ENCODE measurements at regions of chr10 and their contacts with region 1.

Region 1: GRCh38 chr10:124916585-124917427 is 25.1 kb upstream of the ZRANB1 start:
- DNase-seq: peak; percentile 95 to 98 (median 96)
- ATAC-seq: peak; percentile 92
- H3K4me3 ChIP-seq: peak overlapping the region; percentile 53
- H3K27ac ChIP-seq: peak overlapping the region; percentile 84
- H3K4me1 ChIP-seq: peaks cover 14 to 31% of the 10 kb centered on the region in 2 experiments
- H3K27me3 ChIP-seq: no peaks in the 10 kb centered on the region
- CTCF ChIP-seq: no peak; a peak in 1 of 6 replicates
- EP300 ChIP-seq: no peak
- POLR2A ChIP-seq: peak; percentile 88
- RAD21 ChIP-seq: no peak

Region 2: GRCh38 chr10:124763267-124763666 is 153.5 kb before region 1 on chr10:
- CTCF ChIA-PET with region 1: no interaction called
- POLR2A ChIA-PET with region 1: no interaction called
- in situ Hi-C with region 1: no loop called
- intact Hi-C with region 1: no loop called
- DNase-seq: no peak
- ATAC-seq: no peak
- H3K4me3 ChIP-seq: no peak overlapping the region
- H3K27ac ChIP-seq: no peak overlapping the region
- H3K4me1 ChIP-seq: no peaks in the 10 kb centered on the region
- H3K27me3 ChIP-seq: no peaks in the 10 kb centered on the region
- CTCF ChIP-seq: no peak
- EP300 ChIP-seq: no peak
- POLR2A ChIP-seq: no peak
- RAD21 ChIP-seq: no peak

Region 3: GRCh38 chr10:124802313-124802675 is 114.5 kb before region 1 on chr10:
- CTCF ChIA-PET with region 1: no interaction called
- POLR2A ChIA-PET with region 1: no interaction called
- in situ Hi-C with region 1: no loop called
- intact Hi-C with region 1: loop called (anchors 5 kb)
- DNase-seq: peak in 2 of 4 experiments; percentile 8 to 21
- ATAC-seq: peak; percentile 18; the same call in 2 of the 3 replicates
- H3K4me3 ChIP-seq: peak overlapping the region; percentile 71
- H3K27ac ChIP-seq: peak overlapping the region; percentile 65
- H3K4me1 ChIP-seq: peaks cover 11 to 12% of the 10 kb centered on the region in 2 experiments; a peak in 4 of 5 replicates
- H3K27me3 ChIP-seq: no peaks in the 10 kb centered on the region
- CTCF ChIP-seq: no peak
- EP300 ChIP-seq: no peak
- POLR2A ChIP-seq: no peak
- RAD21 ChIP-seq: no peak

Region 4: DNA sequence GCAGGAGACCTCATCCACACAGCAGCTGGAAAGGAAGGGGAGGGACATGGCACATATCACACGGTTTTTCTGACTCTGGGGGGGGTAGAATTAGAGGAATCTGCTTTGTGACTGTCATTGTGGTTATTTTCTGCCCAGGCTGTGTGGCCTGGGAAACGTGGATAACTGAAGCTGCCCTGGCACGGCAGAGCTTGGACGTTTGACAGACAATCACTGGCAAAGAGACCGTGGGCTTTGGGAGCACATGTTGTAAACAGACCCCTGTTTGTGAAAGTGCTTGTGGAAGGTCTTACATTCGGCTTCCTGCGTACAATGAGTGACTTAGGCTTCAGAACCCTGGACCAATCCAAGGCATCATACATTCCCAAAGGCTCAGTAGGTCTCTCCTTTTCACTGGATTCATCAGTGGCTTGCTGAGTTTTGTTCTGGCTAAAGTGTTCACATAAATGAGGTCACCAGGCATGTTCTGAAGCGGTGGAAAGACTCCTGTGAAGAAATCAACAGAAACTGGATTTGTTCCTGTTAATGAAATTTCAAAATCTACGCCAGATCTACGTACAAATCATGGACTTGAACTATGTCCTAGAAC is 577.9 kb after region 1 on chr10:
- CTCF ChIA-PET with region 1: no interaction called
- POLR2A ChIA-PET with region 1: no interaction called
- in situ Hi-C with region 1: no loop called
- intact Hi-C with region 1: no loop called
- DNase-seq: no peak
- ATAC-seq: no peak
- H3K4me3 ChIP-seq: no peak overlapping the region
- H3K27ac ChIP-seq: no peak overlapping the region
- H3K4me1 ChIP-seq: no peaks in the 10 kb centered on the region
- H3K27me3 ChIP-seq: peaks cover 2 to 3% of the 10 kb centered on the region in 2 experiments; a peak in 2 of 5 replicates
- CTCF ChIP-seq: no peak
- EP300 ChIP-seq: no peak
- POLR2A ChIP-seq: no peak
- RAD21 ChIP-seq: no peak